ENCODE measurements at regions of chr12 and their contacts with region 1.

Region 1: DNA sequence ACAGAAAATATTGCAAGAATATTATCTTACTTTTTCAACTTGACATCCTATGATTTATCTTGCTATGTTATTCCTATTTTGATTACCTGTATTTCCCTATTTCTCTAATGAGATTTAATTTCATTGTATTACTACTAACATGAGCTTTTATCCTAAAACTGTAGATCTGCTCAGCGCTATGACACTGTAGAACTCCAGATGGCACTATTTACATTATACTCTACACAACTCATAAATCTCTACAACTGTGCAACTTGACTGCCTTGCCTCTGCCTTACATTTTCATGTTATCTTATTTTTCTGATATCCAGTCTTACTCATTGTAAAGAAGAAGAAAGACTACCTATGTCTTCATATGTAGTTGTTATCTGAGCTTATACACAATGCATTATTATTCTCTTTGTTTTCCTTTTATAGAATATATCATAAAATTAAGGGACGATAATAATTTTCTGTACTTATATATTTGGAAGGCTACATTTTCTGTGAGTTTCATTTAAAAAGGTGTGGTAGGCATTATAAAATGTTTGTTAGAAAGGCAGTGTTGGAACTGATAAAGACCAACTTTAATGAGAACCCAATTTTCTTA is 24.1 kb downstream of the NUP37 start:
- DNase-seq: peak; percentile 9
- ATAC-seq: peak; percentile 64; the same call in 2 of the 3 replicates
- H3K4me3 ChIP-seq: no peak overlapping the region
- H3K27ac ChIP-seq: no peak overlapping the region
- H3K4me1 ChIP-seq: no peaks in the 10 kb centered on the region
- H3K27me3 ChIP-seq: no peaks in the 10 kb centered on the region
- CTCF ChIP-seq: peak; percentile 31
- EP300 ChIP-seq: no peak
- POLR2A ChIP-seq: no peak
- RAD21 ChIP-seq: no peak

Region 2: GRCh38 chr12:102119674-102120563 is 24.1 kb after region 1 on chr12 and contains the starts of genes NUP37 and PARPBP:
- CTCF ChIA-PET with region 1: no interaction called
- POLR2A ChIA-PET with region 1: no interaction called
- in situ Hi-C with region 1: no loop called
- intact Hi-C with region 1: loop called (anchors 1 kb)
- DNase-seq: peak; percentile 84
- ATAC-seq: peak; percentile 98
- H3K4me3 ChIP-seq: peak within 1 kb of the TSS; percentile 83 to 97 (median 86)
- H3K27ac ChIP-seq: peak within 1 kb of the TSS; percentile 73
- H3K4me1 ChIP-seq: peaks cover 33% of the 10 kb centered on the region
- H3K27me3 ChIP-seq: no peaks in the 10 kb centered on the region; a peak in 1 of 5 replicates
- CTCF ChIP-seq: peak; percentile 41
- EP300 ChIP-seq: no peak
- POLR2A ChIP-seq: peak; percentile 73 to 92; a peak in 3 of 4 replicates
- RAD21 ChIP-seq: no peak; the same call in 1 of the 2 replicates
- total RNA-seq, gene NUP37: 80.1 and 130 TPM in 2 replicates
- total RNA-seq, gene PARPBP: 28.4 and 43.3 TPM in 2 replicates

Region 3: DNA sequence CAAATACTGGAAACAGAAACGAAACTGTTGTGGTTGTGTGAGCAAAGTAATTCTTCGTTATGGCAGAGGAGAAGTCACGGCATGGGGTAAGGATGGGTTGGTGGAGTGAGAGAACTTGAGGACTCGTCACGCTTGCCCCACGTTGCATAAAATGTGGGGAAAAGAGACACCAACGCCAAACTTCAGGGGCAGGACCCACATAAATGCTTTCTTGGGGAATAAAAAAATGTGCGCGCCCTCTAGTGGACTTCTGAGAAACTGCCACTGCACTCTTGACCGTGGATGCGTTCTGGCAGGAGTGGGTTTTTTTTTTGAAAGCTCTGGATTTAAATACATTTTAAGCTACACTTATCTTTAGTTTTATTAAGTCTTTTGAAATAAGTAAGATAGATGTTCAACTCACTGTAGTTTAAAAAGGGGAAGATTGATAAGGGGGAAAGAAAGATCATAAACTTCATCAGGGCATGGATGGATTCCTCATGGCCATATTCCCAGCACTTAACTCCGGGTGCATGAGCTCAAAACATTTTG is 388.7 kb after region 1 on chr12:
- CTCF ChIA-PET with region 1: no interaction called
- POLR2A ChIA-PET with region 1: no interaction called
- in situ Hi-C with region 1: no loop called
- intact Hi-C with region 1: loop called (anchors 10 kb)
- DNase-seq: peak; percentile 26
- ATAC-seq: peak; percentile 62
- H3K4me3 ChIP-seq: peak overlapping the region in 1 of 3 experiments; percentile 23; a peak in 1 of 6 replicates
- H3K27ac ChIP-seq: no peak overlapping the region
- H3K4me1 ChIP-seq: no peaks in the 10 kb centered on the region
- H3K27me3 ChIP-seq: no peaks in the 10 kb centered on the region
- CTCF ChIP-seq: peak; percentile 79
- EP300 ChIP-seq: no peak
- POLR2A ChIP-seq: no peak
- RAD21 ChIP-seq: no peak

Region 4: GRCh38 chr12:102543494-102544485 is 448.0 kb after region 1 on chr12:
- CTCF ChIA-PET with region 1: no interaction called
- POLR2A ChIA-PET with region 1: no interaction called
- in situ Hi-C with region 1: no loop called
- intact Hi-C with region 1: loop called (anchors 2 kb)
- DNase-seq: no peak
- ATAC-seq: peak; percentile 64
- H3K4me3 ChIP-seq: no peak overlapping the region
- H3K27ac ChIP-seq: no peak overlapping the region
- H3K4me1 ChIP-seq: no peaks in the 10 kb centered on the region
- H3K27me3 ChIP-seq: no peaks in the 10 kb centered on the region
- CTCF ChIP-seq: peak; percentile 45
- EP300 ChIP-seq: no peak
- POLR2A ChIP-seq: no peak
- RAD21 ChIP-seq: no peak

Region 5: DNA sequence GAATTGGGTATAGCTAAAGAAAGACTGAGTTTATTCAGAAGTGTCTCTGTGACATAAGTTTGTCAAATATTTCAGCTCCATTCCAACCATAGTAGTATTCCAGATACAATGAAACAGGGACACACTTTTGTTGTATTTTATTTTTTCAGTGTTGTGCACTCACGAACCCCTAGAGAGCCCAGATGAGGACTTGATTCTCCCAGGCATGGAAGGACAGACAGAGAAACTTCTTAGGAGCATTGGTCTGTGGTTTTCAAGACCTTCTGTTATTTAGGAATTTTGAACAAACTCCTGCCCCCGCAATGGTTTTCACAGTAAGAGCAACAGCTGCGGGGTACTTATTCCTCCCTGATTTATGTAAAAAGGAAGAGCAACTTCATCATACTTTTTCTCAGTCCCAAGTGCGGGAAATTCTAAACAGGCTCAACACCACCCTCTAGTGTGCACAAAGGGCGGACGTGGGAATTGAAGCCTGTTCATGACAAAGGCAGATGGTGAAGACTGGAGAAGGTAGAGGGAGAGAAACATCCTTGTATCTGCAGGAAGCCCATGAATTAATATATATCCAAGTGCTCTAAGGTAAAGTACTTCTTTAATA is 673.6 kb after region 1 on chr12:
- CTCF ChIA-PET with region 1: no interaction called
- POLR2A ChIA-PET with region 1: no interaction called
- in situ Hi-C with region 1: no loop called
- intact Hi-C with region 1: loop called (anchors 10 kb)
- DNase-seq: peak; percentile 34
- ATAC-seq: peak; percentile 86
- H3K4me3 ChIP-seq: no peak overlapping the region
- H3K27ac ChIP-seq: no peak overlapping the region
- H3K4me1 ChIP-seq: no peaks in the 10 kb centered on the region
- H3K27me3 ChIP-seq: no peaks in the 10 kb centered on the region
- CTCF ChIP-seq: peak; percentile 77
- EP300 ChIP-seq: no peak
- POLR2A ChIP-seq: no peak
- RAD21 ChIP-seq: no peak

Measured in HepG2 (cell line).